ENCODE measurements at regions of chr6 and their contacts with region 1.

Region 1: DNA sequence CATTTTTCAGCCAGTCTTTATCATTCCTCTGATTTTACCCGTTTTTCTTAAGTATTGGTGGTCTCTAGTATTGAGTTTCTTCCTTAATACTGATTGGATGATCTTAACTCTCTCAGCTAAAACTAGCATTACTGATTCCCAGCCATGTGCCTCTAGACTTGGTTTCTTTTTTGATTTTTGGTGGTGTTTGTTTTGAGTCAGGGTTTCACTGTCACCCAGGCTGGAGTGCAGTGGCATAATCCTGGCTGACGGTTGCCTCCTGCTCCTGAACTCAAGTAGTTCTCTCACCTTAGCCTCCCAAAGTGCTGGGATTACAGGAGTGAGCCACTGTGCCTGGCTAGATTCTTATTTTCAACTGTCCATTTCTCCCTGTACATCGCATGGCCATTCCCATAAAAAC is 24.9 kb downstream of the DPPA5 start:
- DNase-seq: no peak
- H3K4me3 ChIP-seq: no peak overlapping the region
- H3K27ac ChIP-seq: no peak overlapping the region
- H3K4me1 ChIP-seq: no peaks in the 10 kb centered on the region
- H3K27me3 ChIP-seq: peaks cover 0 to 6% (median 0%) of the 10 kb centered on the region in 4 donors
- CTCF ChIP-seq: no peak
- EP300 ChIP-seq: no peak
- POLR2A ChIP-seq: no peak

Region 2: GRCh38 chr6:73258721-73259120 is 70.5 kb before region 1 on chr6:
- intact Hi-C with region 1: no loop called
- DNase-seq: no peak
- H3K4me3 ChIP-seq: no peak overlapping the region
- H3K27ac ChIP-seq: no peak overlapping the region
- H3K4me1 ChIP-seq: peaks cover 0 to 15% (median 8%) of the 10 kb centered on the region in 4 donors
- H3K27me3 ChIP-seq: no peaks in the 10 kb centered on the region
- CTCF ChIP-seq: no peak
- EP300 ChIP-seq: no peak
- POLR2A ChIP-seq: no peak

Region 3: DNA sequence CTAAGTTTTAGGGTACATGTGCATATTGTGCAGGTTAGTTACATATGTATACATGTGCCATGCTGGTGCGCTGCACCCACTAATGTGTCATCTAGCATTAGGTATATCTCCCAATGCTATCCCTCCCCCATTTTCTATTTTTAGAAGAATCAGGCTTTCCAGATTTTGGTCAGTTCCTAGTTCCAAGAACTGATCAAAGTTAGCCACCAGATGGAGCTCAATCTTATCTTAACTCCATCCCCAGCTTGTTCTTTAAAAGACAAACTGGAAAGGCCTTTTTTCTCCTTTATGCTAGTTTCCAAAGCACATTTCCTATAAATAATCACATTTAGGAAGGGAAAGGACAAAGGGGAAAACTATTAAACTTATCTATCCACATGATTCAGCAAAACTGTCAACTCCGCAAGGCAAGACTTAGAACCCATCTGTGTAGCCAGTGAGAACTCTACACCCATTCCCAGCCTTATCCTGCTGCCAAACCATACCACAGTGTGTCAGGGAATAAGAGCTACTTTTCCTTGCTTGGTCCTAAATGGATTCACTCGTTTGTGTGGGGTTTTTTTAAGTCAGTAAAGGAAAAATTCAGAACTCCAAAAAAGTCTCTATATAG is 43.4 kb before region 1 on chr6:
- intact Hi-C with region 1: loop called (anchors 5 kb)
- DNase-seq: no peak
- H3K4me3 ChIP-seq: no peak overlapping the region
- H3K27ac ChIP-seq: no peak overlapping the region
- H3K4me1 ChIP-seq: no peaks in the 10 kb centered on the region
- H3K27me3 ChIP-seq: no peaks in the 10 kb centered on the region
- CTCF ChIP-seq: peak in 2 of 3 experiments; percentile 36 to 48
- EP300 ChIP-seq: no peak
- POLR2A ChIP-seq: no peak

Region 4: GRCh38 chr6:73614813-73615212 is 285.6 kb after region 1 on chr6:
- intact Hi-C with region 1: no loop called
- DNase-seq: no peak
- H3K4me3 ChIP-seq: no peak overlapping the region
- H3K27ac ChIP-seq: no peak overlapping the region
- H3K4me1 ChIP-seq: peaks cover 0 to 10% (median 9%) of the 10 kb centered on the region in 4 donors
- H3K27me3 ChIP-seq: no peaks in the 10 kb centered on the region
- CTCF ChIP-seq: no peak
- EP300 ChIP-seq: no peak
- POLR2A ChIP-seq: no peak

Measured in esophagus muscularis mucosa (tissue), 4 donors.